ENCODE measurements at regions of chr3 and their contacts with region 1.

Region 1: GRCh38 chr3:183385698-183386613 is 42.5 kb downstream of the MCF2L2 start:
- DNase-seq: peak; percentile 70
- H3K4me3 Mint-ChIP-seq: no peak overlapping the region
- H3K27ac Mint-ChIP-seq: no peak overlapping the region
- H3K4me1 Mint-ChIP-seq: peaks cover 2% of the 10 kb centered on the region
- H3K27me3 Mint-ChIP-seq: peaks cover 8% of the 10 kb centered on the region

Region 2: DNA sequence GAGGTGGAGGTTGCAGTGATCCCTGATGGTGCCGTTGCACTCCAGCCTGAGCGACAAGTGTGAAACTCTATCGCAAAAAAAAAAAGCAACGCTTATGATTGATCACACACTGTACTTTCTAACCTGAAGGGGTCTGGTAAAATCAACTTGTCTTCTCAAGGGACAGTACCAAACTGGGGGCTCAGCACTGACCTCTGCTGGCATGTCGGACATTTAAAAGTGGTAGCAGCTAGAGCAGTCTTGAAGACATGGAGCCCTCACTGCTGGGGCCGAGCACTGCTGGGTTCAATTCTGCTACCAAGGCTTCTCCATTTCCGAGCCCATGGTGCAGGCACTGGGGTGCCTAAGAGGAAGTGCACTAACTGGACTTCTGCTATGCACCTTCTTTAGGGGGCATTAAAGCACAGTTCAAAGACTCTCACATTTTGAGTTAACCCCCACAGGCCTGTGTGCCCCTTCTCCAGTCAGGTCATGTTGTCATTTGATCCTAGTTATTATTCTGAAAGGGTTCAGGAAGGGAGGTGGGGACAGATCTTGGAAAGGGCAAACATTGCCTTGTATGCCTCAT is 197.0 kb before region 1 on chr3:
- CTCF ChIA-PET with region 1: interaction called, 202 read pairs
- DNase-seq: peak; percentile 54
- H3K4me3 Mint-ChIP-seq: no peak overlapping the region
- H3K27ac Mint-ChIP-seq: no peak overlapping the region
- H3K4me1 Mint-ChIP-seq: no peaks in the 10 kb centered on the region
- H3K27me3 Mint-ChIP-seq: no peaks in the 10 kb centered on the region

Region 3: DNA sequence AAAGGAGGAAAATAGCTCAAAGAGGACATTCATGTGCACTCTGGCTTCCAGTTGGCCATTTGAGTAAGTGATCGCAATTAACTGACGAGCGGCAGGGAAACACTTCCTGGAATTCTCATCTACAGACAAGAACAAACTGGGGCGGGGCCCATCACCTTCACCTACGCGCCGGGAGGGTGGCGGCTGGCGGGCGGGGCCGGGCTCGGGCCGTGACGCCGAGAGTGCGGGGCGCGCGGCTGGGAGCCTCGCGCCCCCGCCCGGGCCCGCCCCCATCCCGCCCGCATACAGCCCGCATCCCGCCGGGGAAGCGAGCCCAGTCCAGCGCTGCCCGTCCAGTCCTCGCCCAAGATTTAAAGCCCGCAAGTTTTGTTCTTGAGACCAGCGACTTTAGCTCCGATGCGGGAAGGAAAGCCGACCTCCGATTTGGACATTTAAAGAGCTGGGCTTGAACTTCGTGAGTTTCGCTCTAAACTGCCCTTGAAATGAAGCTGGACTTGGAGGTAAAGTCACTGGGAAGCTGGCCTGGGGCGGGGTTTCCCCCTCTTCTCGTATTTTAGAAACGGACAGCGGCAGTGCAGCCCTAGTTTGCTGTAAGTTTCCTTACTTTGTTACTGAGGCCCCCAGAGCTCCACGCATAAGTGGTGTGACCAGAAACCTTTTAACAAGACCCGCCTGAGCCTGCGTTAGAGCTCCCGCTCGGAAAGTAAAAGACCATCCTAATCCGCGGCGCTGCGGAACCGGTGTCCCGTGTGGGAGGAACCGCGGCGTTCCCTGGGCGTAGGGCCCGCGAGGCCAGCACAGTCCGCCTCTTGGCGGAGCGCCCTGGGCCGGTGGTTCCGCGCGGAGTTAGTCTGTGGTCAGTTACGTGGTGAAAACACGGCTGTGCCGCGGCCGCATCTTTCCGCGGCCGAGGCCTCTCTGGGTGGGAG is 132.7 kb before region 1 on chr3 and contains the start of gene B3GNT5:
- CTCF ChIA-PET with region 1: interaction called, 15 read pairs
- DNase-seq: peak; percentile 50
- H3K4me3 Mint-ChIP-seq: peak within 1 kb of the TSS; percentile 66
- H3K27ac Mint-ChIP-seq: no peak within 1 kb of the TSS
- H3K4me1 Mint-ChIP-seq: peaks cover 9% of the 10 kb centered on the region
- H3K27me3 Mint-ChIP-seq: peaks cover 45% of the 10 kb centered on the region